ENCODE measurements at regions of chr4 and their contacts with region 1.

Region 1: DNA sequence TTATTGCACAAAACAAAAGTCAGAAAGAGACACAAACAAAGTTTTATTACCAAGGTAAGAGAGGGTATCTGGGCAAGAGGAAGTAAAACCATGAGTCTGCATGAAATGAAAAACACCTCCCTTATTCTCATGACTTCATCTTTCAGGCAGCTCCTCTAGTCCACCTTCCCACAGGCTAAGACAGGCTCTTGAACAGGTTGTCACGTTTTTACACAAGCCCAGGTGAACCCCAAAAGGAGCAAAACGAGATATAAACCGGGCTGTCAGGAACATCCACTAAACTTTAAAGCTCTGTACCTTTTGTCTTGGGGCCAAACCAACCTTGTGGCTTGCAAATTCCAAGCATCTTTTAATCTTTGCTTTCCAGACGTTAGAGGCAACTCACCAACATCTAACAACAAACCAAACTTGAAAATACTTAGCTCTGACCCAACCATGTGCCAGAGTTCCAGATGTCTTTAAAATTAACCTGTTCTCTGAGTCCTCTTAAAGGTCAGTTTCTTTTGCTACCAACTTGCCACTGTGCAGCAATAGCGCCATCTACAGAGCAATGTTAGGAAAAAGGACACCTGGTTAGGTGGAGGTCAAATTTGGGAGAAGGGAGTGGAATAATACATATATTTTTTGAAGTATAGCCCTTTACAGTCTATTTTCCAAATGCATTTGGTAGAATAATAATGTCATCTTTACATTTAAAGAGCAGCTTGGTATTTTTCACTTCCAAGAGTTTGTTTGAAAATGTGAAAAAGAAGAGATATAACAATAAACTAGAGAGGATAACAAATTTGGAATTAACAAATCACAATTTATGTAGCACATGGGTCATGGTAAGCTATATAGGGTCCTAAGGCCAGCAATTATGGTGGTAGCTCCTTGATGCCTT is 73.1 kb downstream of the QRFPR start:
- DNase-seq: peak; percentile 24 to 82
- ATAC-seq: peak; percentile 63 to 74 (median 68)
- H3K4me3 ChIP-seq: no peak overlapping the region
- H3K4me3 Mint-ChIP-seq: no peak overlapping the region
- H3K27ac ChIP-seq: no peak overlapping the region
- H3K27ac Mint-ChIP-seq: no peak overlapping the region
- H3K4me1 ChIP-seq: no peaks in the 10 kb centered on the region
- H3K4me1 Mint-ChIP-seq: peaks cover 0 to 10% of the 10 kb centered on the region in 2 donors
- H3K27me3 ChIP-seq: no peaks in the 10 kb centered on the region
- H3K27me3 Mint-ChIP-seq: peaks cover under 1 to 15% of the 10 kb centered on the region in 2 donors
- CTCF ChIP-seq: peak; percentile 88

Region 2: DNA sequence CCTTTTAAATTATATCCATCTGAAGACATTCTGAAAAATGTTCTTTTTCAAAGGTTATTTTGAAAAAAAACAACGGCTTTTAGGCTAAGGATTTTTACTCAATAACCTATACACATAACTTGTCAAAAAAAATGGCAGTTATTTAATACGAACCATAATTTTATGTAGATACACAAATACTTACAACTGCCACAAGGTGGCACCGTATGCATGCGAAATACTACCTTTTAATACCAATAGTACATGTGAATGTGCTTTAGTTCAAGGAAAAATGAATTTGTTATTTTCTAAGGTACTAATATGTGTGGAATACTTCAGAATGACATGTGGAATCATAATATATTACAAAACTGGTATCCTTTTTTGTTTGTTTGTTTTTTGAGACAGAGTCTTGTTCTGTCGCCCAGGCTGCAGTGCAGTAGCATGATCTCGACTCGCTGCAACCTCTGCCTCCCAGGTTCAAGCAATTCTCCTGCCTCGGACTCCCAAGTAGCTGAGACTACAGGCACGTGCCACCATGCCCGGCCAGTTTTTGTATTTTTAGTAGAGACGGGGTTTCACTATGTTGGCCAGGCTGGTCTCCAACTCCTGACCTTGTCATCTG is 1236.4 kb before region 1 on chr4:
- intact Hi-C with region 1: loop called (anchors 2 kb)
- DNase-seq: peak; percentile 29 to 86
- ATAC-seq: no peak
- H3K4me3 ChIP-seq: no peak overlapping the region
- H3K4me3 Mint-ChIP-seq: no peak overlapping the region
- H3K27ac ChIP-seq: no peak overlapping the region
- H3K27ac Mint-ChIP-seq: no peak overlapping the region
- H3K4me1 ChIP-seq: peaks cover 8% of the 10 kb centered on the region
- H3K4me1 Mint-ChIP-seq: peaks cover 20% of the 10 kb centered on the region in 2 donors
- H3K27me3 ChIP-seq: no peaks in the 10 kb centered on the region
- H3K27me3 Mint-ChIP-seq: no peaks in the 10 kb centered on the region
- CTCF ChIP-seq: peak; percentile 73